CD8-positive, alpha-beta memory T cell (primary cell): ENCODE measurements at regions of chr2 and their contacts with region 1.

Region 1: DNA sequence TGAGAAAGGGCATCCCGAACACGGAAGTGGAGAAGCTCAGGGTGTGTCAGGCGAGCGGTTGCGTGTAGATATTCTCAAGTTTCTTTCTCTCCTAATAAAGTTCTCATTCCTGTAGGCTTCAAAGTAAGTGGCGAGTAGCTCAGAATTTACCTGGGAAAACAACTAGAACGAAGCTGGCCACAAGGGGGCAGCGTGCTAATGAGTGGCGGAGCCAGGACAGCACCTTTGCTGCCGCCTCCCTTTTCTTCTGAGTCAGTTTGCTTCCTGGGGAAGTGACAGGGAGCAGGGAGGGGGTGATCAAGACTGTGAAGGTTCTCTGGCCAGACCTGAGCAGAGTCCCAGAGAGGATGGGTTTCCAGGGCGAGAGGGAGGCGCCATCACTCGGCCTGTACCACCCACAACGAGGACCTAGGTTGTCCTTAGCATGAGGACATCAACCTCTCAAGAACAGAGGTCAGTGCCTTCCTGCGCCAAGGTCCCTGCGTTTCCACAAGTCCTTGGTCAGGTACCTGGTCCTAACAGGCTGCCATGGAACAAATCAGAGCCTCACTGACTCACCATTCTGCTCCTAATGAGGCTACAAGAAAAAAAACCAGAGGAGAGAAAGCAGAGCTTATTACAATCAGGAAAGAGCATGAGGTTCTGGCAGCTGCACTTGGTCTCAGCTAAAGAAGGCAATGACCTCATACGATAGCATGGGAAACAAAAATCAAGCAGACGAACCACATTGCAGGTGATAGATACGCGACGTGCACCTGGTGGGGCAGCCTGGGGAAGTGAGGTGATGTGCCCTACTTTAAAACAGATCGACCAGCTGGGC is 98.6 kb downstream of the PLB1 start:
- DNase-seq: peak; percentile 69 to 88 (median 79)
- H3K4me3 ChIP-seq: peak overlapping the region; percentile 16
- H3K4me3 Mint-ChIP-seq: peak overlapping the region; percentile 4 to 76 (median 66)
- H3K27ac ChIP-seq: peak overlapping the region; percentile 25
- H3K27ac Mint-ChIP-seq: peak overlapping the region; percentile 52 to 96 (median 92)
- H3K4me1 ChIP-seq: peaks cover 17% of the 10 kb centered on the region
- H3K4me1 Mint-ChIP-seq: peaks cover 10 to 15% (median 14%) of the 10 kb centered on the region in 3 donors
- H3K27me3 ChIP-seq: no peaks in the 10 kb centered on the region
- H3K27me3 Mint-ChIP-seq: peaks cover 6 to 9% of the 10 kb centered on the region in 2 donors

Region 2: DNA sequence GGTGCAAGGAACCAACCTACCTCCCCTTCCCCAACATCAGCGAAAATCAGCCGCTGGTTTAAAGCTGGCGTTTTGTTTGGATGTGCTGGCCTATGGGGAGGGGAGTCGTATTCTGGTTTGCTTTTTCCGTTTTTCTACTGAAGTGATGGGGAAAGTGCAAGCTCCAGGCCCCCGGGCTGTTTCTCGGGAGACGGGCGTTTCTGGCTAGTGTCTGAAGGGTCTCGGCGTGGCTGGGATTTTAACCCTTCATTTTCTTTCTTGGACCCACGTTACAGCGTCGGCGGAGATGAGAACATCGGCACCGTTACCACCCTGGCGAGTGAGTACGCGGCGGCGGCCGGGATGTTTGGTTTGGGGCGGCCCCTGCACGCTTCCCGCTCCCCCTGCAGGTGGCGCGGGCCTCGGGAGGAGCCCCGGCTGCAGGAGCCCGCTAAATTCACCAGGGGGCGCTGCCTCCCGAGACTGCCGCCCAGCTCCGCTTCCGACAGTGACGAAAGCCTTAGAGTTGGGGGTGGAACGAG is 27.9 kb before region 1 on chr2:
- CTCF ChIA-PET with region 1: interaction called, 39 read pairs
- POLR2A ChIA-PET with region 1: interaction called, 4 read pairs
- DNase-seq: peak; percentile 83 to 90 (median 86)
- H3K4me3 ChIP-seq: peak overlapping the region; percentile 66
- H3K4me3 Mint-ChIP-seq: peak overlapping the region; percentile 91 to 97 (median 92)
- H3K27ac ChIP-seq: no peak overlapping the region
- H3K27ac Mint-ChIP-seq: peak overlapping the region; percentile 32 to 98 (median 92)
- H3K4me1 ChIP-seq: peaks cover 11% of the 10 kb centered on the region
- H3K4me1 Mint-ChIP-seq: peaks cover 15 to 21% (median 18%) of the 10 kb centered on the region in 3 donors
- H3K27me3 ChIP-seq: no peaks in the 10 kb centered on the region
- H3K27me3 Mint-ChIP-seq: peaks cover 1 to 3% of the 10 kb centered on the region in 2 donors

Region 3: DNA sequence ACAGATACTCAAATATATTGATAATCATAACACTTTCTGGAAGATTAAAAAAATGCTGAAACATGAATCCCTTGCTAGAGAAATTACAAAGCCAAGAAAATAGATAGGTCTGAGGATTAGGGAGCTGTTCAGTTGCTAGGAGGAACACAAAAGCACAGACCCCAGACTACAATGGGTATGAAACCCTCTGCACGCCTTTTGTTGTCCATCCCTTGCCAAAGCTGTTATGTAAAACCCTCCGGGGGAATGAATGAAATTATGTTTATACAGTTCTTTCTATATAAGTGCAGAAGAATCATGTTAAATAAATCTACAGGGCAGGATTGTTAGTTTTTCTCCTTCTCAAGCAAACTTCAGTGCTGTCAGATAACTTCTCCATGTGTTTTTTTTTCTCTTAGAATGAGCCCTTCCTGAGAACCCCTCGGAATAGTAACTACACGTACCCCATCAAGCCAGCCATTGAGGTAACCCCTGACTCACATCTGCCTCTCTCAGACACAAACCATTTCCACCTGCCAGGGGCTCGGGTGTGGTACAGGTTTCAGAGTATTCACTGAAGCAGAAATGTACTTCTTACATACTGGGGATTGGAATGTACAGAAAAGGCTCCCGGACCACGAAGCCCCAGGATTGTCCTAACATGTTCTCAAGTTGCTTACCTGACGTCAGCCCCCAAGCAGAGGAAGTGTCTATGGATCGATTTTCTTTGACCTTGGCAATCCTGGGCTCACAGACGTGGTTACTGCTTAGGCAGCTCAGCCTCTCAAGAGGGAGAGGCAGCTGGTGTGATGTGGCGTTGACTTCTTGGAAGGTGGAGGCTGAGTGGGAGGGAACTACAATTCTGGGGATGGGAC is 19.4 kb after region 1 on chr2:
- CTCF ChIA-PET with region 1: interaction called, 41 read pairs
- POLR2A ChIA-PET with region 1: interaction called, 3 read pairs
- DNase-seq: no peak
- H3K4me3 ChIP-seq: no peak overlapping the region
- H3K4me3 Mint-ChIP-seq: no peak overlapping the region
- H3K27ac ChIP-seq: no peak overlapping the region
- H3K27ac Mint-ChIP-seq: no peak overlapping the region
- H3K4me1 ChIP-seq: peaks cover 67% of the 10 kb centered on the region
- H3K4me1 Mint-ChIP-seq: peaks cover 10 to 35% (median 13%) of the 10 kb centered on the region in 3 donors
- H3K27me3 ChIP-seq: no peaks in the 10 kb centered on the region
- H3K27me3 Mint-ChIP-seq: peaks cover 1 to 4% of the 10 kb centered on the region in 2 donors

Region 4: GRCh38 chr2:28678944-28679343 is 84.4 kb after region 1 on chr2:
- CTCF ChIA-PET with region 1: interaction called, 10 read pairs
- POLR2A ChIA-PET with region 1: no interaction called
- DNase-seq: no peak
- H3K4me3 ChIP-seq: no peak overlapping the region
- H3K4me3 Mint-ChIP-seq: no peak overlapping the region
- H3K27ac ChIP-seq: no peak overlapping the region
- H3K27ac Mint-ChIP-seq: peak overlapping the region in 5 of 8 donors; percentile 44 to 82 (median 70)
- H3K4me1 ChIP-seq: peaks cover 23% of the 10 kb centered on the region
- H3K4me1 Mint-ChIP-seq: peaks cover 19 to 20% (median 19%) of the 10 kb centered on the region in 3 donors
- H3K27me3 ChIP-seq: no peaks in the 10 kb centered on the region
- H3K27me3 Mint-ChIP-seq: no peaks in the 10 kb centered on the region

Region 5: GRCh38 chr2:28761420-28761819 is 166.9 kb after region 1 on chr2:
- CTCF ChIA-PET with region 1: interaction called, 59 read pairs
- POLR2A ChIA-PET with region 1: interaction called, 3 read pairs
- DNase-seq: no peak
- H3K4me3 ChIP-seq: no peak overlapping the region
- H3K4me3 Mint-ChIP-seq: peak overlapping the region in 3 of 7 donors; percentile 1 to 19 (median 14)
- H3K27ac ChIP-seq: no peak overlapping the region
- H3K27ac Mint-ChIP-seq: peak overlapping the region in 3 of 8 donors; percentile 6 to 17 (median 17)
- H3K4me1 ChIP-seq: peaks cover 72% of the 10 kb centered on the region
- H3K4me1 Mint-ChIP-seq: peaks cover 75 to 91% (median 88%) of the 10 kb centered on the region in 3 donors
- H3K27me3 ChIP-seq: no peaks in the 10 kb centered on the region
- H3K27me3 Mint-ChIP-seq: no peaks in the 10 kb centered on the region